Activated CD4-positive, alpha-beta memory T cell treated with anti-CD3 and anti-CD28 coated beads, Interleukin-2, amount 10 ng/mL, durations not matched to agents 7 days and 5 days (primary cell): ENCODE measurements at regions of chr6 and their contacts with region 1.

Region 1: GRCh38 chr6:157323255-157323965 is at the start of gene TMEM242:
- DNase-seq: peak; percentile 91
- H3K4me3 Mint-ChIP-seq: peak within 1 kb of the TSS; percentile 94
- H3K27ac Mint-ChIP-seq: peak within 1 kb of the TSS; percentile 81
- H3K4me1 Mint-ChIP-seq: peaks cover 50% of the 10 kb centered on the region
- H3K27me3 Mint-ChIP-seq: peaks cover 5% of the 10 kb centered on the region
- total RNA-seq, gene TMEM242: 10.1 to 10.8 TPM

Region 2: DNA sequence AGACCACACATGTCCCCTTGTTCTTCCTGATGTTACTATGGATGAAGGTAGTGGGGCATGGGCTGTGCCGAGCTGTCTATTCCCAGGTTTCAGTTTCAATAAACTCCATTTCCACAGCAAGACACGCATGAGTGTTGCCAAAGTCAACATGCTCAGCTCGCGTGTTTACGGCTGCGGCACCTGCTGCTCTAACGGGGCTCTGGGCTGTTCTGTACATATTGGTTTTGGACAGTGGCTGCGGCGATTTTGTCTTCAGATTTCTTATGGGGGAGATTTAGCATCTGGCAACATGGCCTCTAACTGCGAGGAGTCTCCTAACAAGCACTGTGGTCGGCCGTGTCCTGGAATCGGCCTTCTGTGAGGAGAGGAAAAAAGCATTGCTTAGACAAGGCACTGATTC is 58.7 kb before region 1 on chr6:
- CTCF ChIA-PET with region 1: no interaction called
- POLR2A ChIA-PET with region 1: no interaction called
- DNase-seq: no peak
- H3K4me3 Mint-ChIP-seq: no peak overlapping the region
- H3K27ac Mint-ChIP-seq: no peak overlapping the region
- H3K4me1 Mint-ChIP-seq: peaks cover 3% of the 10 kb centered on the region
- H3K27me3 Mint-ChIP-seq: no peaks in the 10 kb centered on the region

Region 3: GRCh38 chr6:157335829-157336228 is 12.4 kb after region 1 on chr6:
- CTCF ChIA-PET with region 1: interaction called, 88 read pairs
- POLR2A ChIA-PET with region 1: interaction called, 9 read pairs
- DNase-seq: no peak
- H3K4me3 Mint-ChIP-seq: no peak overlapping the region
- H3K27ac Mint-ChIP-seq: no peak overlapping the region
- H3K4me1 Mint-ChIP-seq: peaks cover 2% of the 10 kb centered on the region
- H3K27me3 Mint-ChIP-seq: peaks cover 47% of the 10 kb centered on the region

Region 4: DNA sequence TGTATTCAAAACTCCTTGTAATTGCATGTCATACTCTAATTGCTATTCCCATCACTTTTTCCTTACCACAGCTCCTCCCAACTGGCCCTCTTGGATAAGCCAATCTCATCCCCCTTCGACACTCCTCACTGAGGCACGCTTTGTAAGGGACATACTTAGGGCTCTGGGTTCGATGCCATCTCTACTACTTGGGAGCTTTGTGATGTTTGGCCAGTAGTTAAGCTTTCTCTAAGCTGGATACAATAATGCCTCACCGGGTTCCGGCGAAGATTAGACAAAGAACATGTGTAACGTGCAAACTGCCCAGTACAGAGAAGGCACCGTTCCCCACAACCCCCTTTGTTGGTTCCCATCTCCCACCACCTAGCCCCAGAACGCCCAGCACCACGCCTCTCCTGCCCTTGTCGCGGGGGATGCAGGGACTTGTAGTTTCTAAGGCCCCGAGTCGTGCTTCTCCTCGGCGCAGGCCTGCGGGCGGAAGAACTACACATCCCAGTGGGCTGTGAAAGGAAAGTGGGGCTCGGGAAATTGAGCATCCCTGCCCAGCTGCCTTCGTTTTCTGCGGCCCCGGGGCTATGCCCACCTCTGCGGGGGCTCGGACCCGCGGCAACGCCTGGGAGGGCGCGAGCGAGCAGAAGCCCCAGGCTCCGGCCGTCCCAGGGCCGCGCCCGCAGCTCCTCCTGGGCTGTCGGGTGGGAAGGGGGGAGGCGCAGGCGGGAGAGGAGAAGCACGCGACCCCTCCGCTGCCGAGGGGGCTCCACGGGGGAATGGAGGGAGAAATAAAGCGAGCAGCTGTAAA is 56.4 kb after region 1 on chr6:
- CTCF ChIA-PET with region 1: interaction called, 5 read pairs
- POLR2A ChIA-PET with region 1: interaction called, 53 read pairs
- DNase-seq: peak; percentile 91
- H3K4me3 Mint-ChIP-seq: peak overlapping the region; percentile 67
- H3K27ac Mint-ChIP-seq: peak overlapping the region; percentile 58
- H3K4me1 Mint-ChIP-seq: peaks cover 29% of the 10 kb centered on the region
- H3K27me3 Mint-ChIP-seq: peaks cover 6% of the 10 kb centered on the region

Region 5: GRCh38 chr6:157443066-157443800 is 119.8 kb after region 1 on chr6:
- CTCF ChIA-PET with region 1: no interaction called
- POLR2A ChIA-PET with region 1: no interaction called
- DNase-seq: peak; percentile 37
- H3K4me3 Mint-ChIP-seq: no peak overlapping the region
- H3K27ac Mint-ChIP-seq: peak overlapping the region; percentile 9
- H3K4me1 Mint-ChIP-seq: peaks cover 17% of the 10 kb centered on the region
- H3K27me3 Mint-ChIP-seq: no peaks in the 10 kb centered on the region

Region 6: DNA sequence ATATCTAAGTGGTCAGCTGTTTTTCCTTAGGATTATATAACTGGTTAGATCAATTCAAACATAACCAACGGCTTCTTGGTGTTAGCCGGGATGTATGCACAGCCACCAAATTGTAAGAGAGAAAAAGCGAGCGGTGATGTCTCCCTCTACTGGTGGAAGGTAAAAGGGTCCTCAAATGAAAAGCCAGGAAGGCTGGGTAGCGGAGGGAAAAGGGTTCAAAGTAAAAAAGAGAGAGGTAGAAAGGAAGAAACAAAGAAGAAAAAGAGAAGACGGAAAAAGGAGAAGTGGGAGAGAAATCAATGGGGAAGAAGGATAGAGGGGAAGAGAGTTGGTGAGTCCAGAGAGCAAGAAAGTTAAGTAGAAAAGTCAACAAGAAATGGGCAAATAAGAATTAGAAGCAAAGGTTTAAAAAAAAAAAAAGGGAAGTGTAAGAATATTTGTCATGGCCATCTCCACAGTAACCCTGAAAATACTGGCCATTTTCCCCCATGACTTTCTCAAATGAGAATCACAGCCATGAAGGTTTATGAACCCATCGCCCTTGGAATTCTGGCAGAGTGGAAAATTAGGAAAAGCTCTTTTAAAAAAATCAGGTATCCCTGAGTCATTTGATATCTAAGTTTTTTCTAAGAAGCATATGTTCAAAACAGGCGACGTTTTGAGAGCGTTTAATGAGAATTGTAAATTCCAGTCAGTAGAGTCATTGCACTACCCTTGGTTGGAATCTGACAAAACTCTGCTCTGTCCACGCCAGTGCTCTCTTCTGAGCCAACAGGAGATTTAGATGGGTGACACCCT is 344.0 kb after region 1 on chr6:
- CTCF ChIA-PET with region 1: interaction called, 13 read pairs
- POLR2A ChIA-PET with region 1: interaction called, 4 read pairs
- DNase-seq: peak; percentile 60
- H3K4me3 Mint-ChIP-seq: no peak overlapping the region
- H3K27ac Mint-ChIP-seq: no peak overlapping the region
- H3K4me1 Mint-ChIP-seq: peaks cover 5% of the 10 kb centered on the region
- H3K27me3 Mint-ChIP-seq: peaks cover 4% of the 10 kb centered on the region